HCT116 (cell line): ENCODE measurements at regions of chr21 and their contacts with region 1.

Region 1: DNA sequence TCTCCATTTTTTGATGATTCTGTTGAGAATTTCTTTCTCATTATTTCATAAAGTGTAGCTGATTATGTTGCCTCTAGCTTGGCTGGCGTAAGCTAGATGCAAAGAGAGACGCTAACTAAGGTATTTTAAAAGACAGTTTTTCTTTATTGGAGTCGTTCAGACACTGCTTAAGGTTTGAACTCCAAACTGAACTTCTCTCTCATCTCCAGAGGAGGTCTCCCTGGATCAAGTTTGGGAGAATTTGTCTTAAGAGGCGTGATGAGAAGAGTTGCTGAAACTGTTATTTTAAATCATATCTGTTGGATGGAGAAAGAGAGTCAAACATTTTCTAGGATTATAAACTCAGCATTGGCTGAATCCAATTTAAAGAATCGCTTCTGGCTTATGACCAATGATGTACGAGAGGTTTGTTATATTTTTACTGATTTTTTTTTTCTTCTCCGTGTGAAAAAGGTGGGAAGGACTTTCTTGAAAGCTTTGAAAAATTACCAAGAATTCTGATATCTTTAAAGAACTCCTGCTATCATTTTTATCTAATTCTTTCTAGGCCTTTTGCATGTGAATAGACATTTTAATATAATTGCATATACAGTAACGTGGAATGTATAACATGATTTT is 34.0 kb downstream of the MAP3K7CL start:
- DNase-seq: peak; percentile 69
- ATAC-seq: peak; percentile 72
- H3K4me3 ChIP-seq: no peak overlapping the region
- H3K27ac ChIP-seq: no peak overlapping the region
- H3K4me1 ChIP-seq: peaks cover 18 to 36% of the 10 kb centered on the region in 2 experiments
- H3K27me3 ChIP-seq: no peaks in the 10 kb centered on the region
- CTCF ChIP-seq: peak; percentile 67 to 84 (median 69)
- POLR2A ChIP-seq: no peak
- RAD21 ChIP-seq: peak; percentile 84

Region 2: DNA sequence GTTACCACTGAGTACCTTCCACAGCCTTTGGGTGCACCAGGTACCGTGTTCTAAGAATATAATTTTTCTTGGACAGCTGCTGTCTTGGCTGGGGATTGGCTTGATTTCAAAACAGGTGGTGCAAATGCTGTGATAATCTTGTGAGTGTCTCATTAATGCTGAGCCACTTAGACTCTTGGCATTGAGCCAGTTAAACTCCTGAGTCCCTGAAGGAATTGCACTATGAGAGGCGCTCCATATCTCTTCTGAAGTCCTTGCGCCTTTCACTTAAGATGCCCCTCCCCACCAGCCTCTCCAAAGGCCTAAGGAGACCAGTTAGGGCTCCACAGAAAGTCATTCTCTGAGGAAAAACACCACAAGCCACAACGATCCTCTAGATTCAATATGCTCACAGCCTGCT is 185.3 kb after region 1 on chr21:
- CTCF ChIA-PET with region 1: interaction called, 42 read pairs
- POLR2A ChIA-PET with region 1: no interaction called
- RAD21 ChIA-PET with region 1: interaction called, 5 read pairs
- intact Hi-C with region 1: loop called (anchors 1 kb)
- DNase-seq: no peak
- ATAC-seq: no peak
- H3K4me3 ChIP-seq: no peak overlapping the region
- H3K27ac ChIP-seq: no peak overlapping the region
- H3K4me1 ChIP-seq: no peaks in the 10 kb centered on the region
- H3K27me3 ChIP-seq: no peaks in the 10 kb centered on the region
- CTCF ChIP-seq: no peak
- POLR2A ChIP-seq: no peak
- RAD21 ChIP-seq: no peak

Region 3: DNA sequence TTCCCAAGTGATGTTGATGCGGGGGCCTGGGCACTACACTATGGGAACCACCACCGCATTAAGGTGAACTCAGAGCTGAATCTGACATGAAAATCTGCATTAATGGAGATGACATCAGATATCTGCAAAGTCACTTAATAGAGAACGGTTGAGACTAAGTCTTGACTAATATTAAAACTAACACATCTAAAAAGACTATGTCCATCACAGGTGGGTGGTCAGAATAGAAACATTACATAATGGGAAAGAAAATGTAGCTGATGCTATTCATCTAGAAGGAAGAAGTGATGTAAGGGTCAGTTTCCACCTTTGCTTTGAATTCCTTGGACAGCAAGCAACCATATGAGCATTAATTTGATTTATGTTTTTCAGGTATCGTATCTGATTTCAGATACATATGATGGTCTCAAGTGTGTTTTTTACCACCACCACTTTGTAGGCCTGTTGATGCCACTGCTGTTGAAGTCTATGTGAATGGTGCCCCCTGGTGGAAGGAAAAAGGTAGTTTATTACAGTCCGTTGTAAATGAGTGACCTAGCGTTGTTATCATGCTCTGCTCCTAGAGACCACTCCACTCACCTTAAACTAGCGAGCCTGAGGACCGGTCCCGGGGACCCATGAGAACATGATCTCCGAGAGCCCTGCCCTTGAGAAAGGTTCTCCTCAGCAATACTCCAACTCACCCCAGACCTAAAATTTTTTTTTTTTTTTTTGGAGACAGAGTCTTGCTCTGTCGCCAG is 207.8 kb after region 1 on chr21:
- CTCF ChIA-PET with region 1: interaction called, 35 read pairs
- POLR2A ChIA-PET with region 1: no interaction called
- RAD21 ChIA-PET with region 1: interaction called in 1 of 2 experiments, 4 read pairs
- intact Hi-C with region 1: loop called (anchors 1 kb)
- DNase-seq: peak; percentile 67
- ATAC-seq: peak; percentile 88
- H3K4me3 ChIP-seq: no peak overlapping the region
- H3K27ac ChIP-seq: no peak overlapping the region
- H3K4me1 ChIP-seq: no peaks in the 10 kb centered on the region
- H3K27me3 ChIP-seq: no peaks in the 10 kb centered on the region
- CTCF ChIP-seq: peak; percentile 59 to 82 (median 61); a peak in 5 of 6 replicates
- POLR2A ChIP-seq: no peak
- RAD21 ChIP-seq: peak; percentile 77

Region 4: DNA sequence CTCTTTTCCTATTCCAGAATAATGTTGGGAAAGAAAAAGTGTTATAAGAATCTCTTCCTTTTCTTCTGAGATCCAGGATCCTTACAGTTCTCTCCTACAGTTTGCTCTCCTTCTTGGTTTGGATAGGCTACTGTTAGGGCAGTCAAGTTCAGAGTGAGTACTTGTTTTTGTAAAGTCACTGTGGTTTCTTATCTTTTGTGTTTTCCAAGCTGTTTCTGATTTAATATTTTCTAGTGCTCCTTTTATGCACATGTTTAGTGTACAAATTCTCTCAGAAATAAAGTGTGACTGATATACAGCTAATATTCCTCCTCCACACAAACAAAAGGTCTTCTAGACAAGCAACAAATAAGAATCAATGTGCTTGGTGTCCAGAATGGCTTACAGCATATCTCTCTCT is 242.0 kb after region 1 on chr21:
- CTCF ChIA-PET with region 1: no interaction called
- POLR2A ChIA-PET with region 1: no interaction called
- RAD21 ChIA-PET with region 1: no interaction called
- intact Hi-C with region 1: no loop called
- DNase-seq: no peak
- ATAC-seq: no peak
- H3K4me3 ChIP-seq: no peak overlapping the region
- H3K27ac ChIP-seq: no peak overlapping the region
- H3K4me1 ChIP-seq: peaks cover 0 to 7% of the 10 kb centered on the region in 2 experiments; a peak in 2 of 4 replicates
- H3K27me3 ChIP-seq: no peaks in the 10 kb centered on the region
- CTCF ChIP-seq: no peak
- POLR2A ChIP-seq: no peak
- RAD21 ChIP-seq: no peak

Region 5: DNA sequence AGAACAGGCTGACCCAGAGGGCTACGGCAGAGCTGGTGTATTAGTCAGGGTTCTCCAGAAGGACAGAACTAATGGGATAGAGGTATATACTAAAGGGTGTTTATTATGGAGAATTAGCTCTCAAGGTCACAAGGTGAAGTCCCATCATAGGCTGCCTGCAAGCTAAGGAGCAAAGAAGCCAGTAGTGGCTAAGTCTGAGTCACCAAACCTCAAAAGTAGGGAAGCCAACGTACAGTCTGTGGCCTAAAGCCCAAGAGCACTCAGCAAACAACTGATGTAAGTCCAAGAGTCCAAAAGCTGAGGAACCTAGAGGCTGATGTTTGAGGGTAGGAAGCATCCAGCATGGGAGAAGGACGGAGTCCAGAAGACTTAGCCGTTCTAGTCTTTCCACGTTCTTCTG is 313.5 kb after region 1 on chr21:
- CTCF ChIA-PET with region 1: no interaction called
- POLR2A ChIA-PET with region 1: no interaction called
- RAD21 ChIA-PET with region 1: no interaction called
- intact Hi-C with region 1: loop called (anchors 5 kb)
- DNase-seq: no peak
- ATAC-seq: no peak
- H3K4me3 ChIP-seq: no peak overlapping the region
- H3K27ac ChIP-seq: no peak overlapping the region
- H3K4me1 ChIP-seq: 0 out of 4 replicates have a peak, but pooled peaks cover 4% of the 10 kb centered on the region in 2 experiments
- H3K27me3 ChIP-seq: no peaks in the 10 kb centered on the region
- CTCF ChIP-seq: no peak
- POLR2A ChIP-seq: no peak
- RAD21 ChIP-seq: no peak